ENCODE measurements at regions of chr18 and their contacts with region 1.

Region 1: DNA sequence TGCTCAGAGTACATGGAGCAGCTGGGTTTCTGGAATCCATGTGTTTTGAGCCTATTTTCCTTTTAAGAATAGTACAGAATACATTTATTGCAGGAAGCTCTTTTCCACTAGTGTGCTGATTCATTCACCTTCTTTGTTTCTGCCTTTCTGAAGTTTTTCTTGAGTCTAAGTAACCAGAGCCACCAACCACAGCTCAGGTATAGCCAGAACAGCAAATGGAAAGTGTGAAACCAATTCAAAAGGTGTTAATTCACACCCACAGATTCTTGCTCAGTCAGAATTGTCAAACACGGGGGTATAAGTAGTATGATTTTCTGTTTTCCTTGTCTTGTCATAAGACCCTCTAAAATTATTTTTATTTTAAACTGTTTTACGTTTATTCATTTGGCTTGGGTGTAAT is 75.9 kb upstream of the DYNAP start:
- DNase-seq: no peak
- ATAC-seq: no peak; the same call in 2 of the 3 replicates
- H3K4me3 ChIP-seq: no peak overlapping the region
- H3K27ac ChIP-seq: no peak overlapping the region
- H3K4me1 ChIP-seq: no peaks in the 10 kb centered on the region
- H3K27me3 ChIP-seq: no peaks in the 10 kb centered on the region
- CTCF ChIP-seq: no peak
- EP300 ChIP-seq: no peak
- POLR2A ChIP-seq: no peak
- RAD21 ChIP-seq: no peak

Region 2: DNA sequence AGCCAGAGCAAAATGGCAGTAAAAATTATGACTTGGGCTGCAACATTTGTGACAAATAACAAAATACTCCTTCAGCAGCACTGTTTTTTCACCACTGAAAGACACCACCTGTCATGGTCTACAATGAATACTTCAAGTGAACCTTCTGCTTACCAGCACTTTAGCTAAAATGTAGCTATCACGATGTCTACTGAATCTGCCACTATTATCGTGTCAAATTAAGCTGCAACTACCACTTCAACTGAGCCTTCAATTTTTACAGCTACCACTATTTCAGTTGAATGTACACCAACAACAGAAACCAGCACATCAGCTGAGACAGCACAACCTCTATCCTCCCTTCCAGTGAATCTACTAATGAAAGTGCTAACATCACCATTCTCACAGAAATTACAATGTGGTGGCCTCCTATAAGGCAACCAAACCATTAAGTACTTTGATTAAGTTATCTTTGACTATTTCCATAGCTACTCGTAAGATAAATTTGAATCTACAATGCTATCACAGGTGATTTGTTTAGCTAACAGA is 65.1 kb after region 1 on chr18:
- CTCF ChIA-PET with region 1: no interaction called
- POLR2A ChIA-PET with region 1: no interaction called
- RAD21 ChIA-PET with region 1: no interaction called
- SMC1A ChIA-PET with region 1: no interaction called
- in situ Hi-C with region 1: no loop called
- intact Hi-C with region 1: loop called (anchors 10 kb)
- DNase-seq: no peak
- ATAC-seq: no peak
- H3K4me3 ChIP-seq: no peak overlapping the region
- H3K27ac ChIP-seq: no peak overlapping the region
- H3K4me1 ChIP-seq: no peaks in the 10 kb centered on the region
- H3K27me3 ChIP-seq: no peaks in the 10 kb centered on the region; a peak in 1 of 4 replicates
- CTCF ChIP-seq: no peak
- EP300 ChIP-seq: no peak
- POLR2A ChIP-seq: no peak
- RAD21 ChIP-seq: no peak